CD8-positive, alpha-beta memory T cell (primary cell): ENCODE measurements at regions of chr14 and their contacts with region 1.

Region 1: DNA sequence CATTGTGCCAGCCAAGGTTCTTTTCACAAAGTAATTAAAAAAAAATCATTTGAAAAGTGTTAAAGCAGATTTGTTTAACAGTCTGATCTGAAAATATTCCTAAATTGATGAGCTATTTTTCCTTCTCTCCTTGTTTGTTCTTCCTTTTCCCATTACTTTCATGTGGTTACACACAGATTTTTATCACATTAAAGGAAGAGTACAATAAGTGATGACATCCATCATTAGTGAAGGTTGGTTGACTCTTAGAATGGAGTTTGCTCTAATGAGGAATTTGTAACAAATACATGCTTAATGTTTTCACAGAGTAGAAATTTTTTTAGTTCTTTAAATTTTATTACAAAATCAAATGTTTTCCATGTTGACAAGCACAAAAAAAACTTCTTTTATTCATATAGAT is 18.9 kb upstream of the TOMM20L start:
- DNase-seq: no peak
- H3K4me3 ChIP-seq: no peak overlapping the region
- H3K4me3 Mint-ChIP-seq: no peak overlapping the region
- H3K27ac ChIP-seq: no peak overlapping the region
- H3K27ac Mint-ChIP-seq: no peak overlapping the region
- H3K4me1 ChIP-seq: no peaks in the 10 kb centered on the region
- H3K4me1 Mint-ChIP-seq: peaks cover 0 to 9% (median 7%) of the 10 kb centered on the region in 3 donors
- H3K27me3 ChIP-seq: no peaks in the 10 kb centered on the region
- H3K27me3 Mint-ChIP-seq: no peaks in the 10 kb centered on the region

Region 2: DNA sequence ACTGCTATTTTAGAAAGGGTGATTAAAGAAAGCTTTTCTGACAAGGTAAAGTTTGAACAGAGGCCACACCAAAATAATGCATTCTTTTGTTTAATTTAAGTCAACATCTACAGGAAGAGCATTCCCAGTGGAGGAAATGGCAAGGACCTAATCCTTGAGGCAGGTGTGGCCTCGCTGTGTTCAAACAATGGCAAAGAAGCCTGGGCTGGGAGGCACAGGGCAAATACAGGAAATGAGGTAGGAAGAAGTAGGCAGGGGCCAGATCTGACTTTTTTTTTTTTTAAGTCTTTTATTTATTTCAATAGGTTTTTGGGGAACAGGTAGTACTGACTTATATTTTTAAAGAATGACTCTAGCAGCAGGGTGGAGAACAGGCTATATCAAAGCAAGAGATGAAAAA is 278.3 kb before region 1 on chr14:
- CTCF ChIA-PET with region 1: no interaction called
- POLR2A ChIA-PET with region 1: no interaction called
- DNase-seq: no peak
- H3K4me3 ChIP-seq: no peak overlapping the region
- H3K4me3 Mint-ChIP-seq: no peak overlapping the region
- H3K27ac ChIP-seq: no peak overlapping the region
- H3K27ac Mint-ChIP-seq: no peak overlapping the region
- H3K4me1 ChIP-seq: no peaks in the 10 kb centered on the region
- H3K4me1 Mint-ChIP-seq: no peaks in the 10 kb centered on the region
- H3K27me3 ChIP-seq: no peaks in the 10 kb centered on the region
- H3K27me3 Mint-ChIP-seq: peaks cover 7 to 10% of the 10 kb centered on the region in 2 donors

Region 3: GRCh38 chr14:58239244-58240195 is 137.3 kb before region 1 on chr14:
- CTCF ChIA-PET with region 1: no interaction called
- POLR2A ChIA-PET with region 1: interaction called, 11 read pairs
- DNase-seq: peak; percentile 70 to 87 (median 82)
- H3K4me3 ChIP-seq: peak overlapping the region; percentile 94
- H3K4me3 Mint-ChIP-seq: no peak overlapping the region
- H3K27ac ChIP-seq: peak overlapping the region; percentile 78
- H3K27ac Mint-ChIP-seq: no peak overlapping the region
- H3K4me1 ChIP-seq: peaks cover 4% of the 10 kb centered on the region
- H3K4me1 Mint-ChIP-seq: peaks cover 11 to 22% (median 18%) of the 10 kb centered on the region in 3 donors
- H3K27me3 ChIP-seq: no peaks in the 10 kb centered on the region
- H3K27me3 Mint-ChIP-seq: peaks cover 0 to 6% of the 10 kb centered on the region in 2 donors

Region 4: DNA sequence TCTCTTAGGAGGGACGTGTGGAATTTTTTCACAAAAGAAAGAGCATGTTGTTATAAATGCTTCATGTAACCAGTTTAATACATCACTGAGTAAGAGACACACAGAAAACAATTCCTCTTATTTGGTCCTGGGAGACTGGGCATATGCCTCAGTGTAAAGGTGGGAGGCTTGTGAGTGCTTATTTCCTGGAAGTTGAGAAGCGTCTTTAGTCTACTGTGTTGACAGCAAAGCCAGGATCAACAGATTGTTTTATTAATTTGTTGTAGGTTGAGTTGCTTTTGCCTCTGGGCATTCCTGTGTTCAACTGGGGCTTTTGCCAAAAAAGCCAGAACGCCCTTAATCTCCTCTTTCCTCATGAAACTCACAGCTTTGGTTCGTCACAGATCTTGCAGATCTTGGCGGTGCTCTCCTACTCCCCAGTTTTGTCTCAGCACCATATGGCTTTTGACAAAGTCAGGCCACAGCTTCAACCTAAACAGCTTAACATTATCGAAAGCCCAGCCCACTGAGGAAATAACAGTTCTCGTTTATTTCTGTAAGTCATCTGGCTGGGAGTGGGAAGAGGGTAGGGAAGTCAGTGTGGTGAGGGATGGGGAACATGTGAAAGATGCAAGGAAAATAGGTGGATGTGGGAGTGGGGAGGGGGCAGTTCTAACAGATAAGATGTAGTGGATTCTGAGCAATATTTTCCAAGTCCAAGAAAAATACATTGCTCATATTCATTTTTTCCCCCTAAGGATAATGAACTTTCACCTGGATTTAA is 488.1 kb after region 1 on chr14:
- CTCF ChIA-PET with region 1: no interaction called
- POLR2A ChIA-PET with region 1: no interaction called
- DNase-seq: no peak
- H3K4me3 ChIP-seq: no peak overlapping the region
- H3K4me3 Mint-ChIP-seq: no peak overlapping the region
- H3K27ac ChIP-seq: no peak overlapping the region
- H3K27ac Mint-ChIP-seq: no peak overlapping the region
- H3K4me1 ChIP-seq: no peaks in the 10 kb centered on the region
- H3K4me1 Mint-ChIP-seq: no peaks in the 10 kb centered on the region
- H3K27me3 ChIP-seq: no peaks in the 10 kb centered on the region
- H3K27me3 Mint-ChIP-seq: peaks cover 1 to 3% of the 10 kb centered on the region in 2 donors